B cell (primary cell): ENCODE measurements at regions of chr11 and their contacts with region 1.

Region 1: DNA sequence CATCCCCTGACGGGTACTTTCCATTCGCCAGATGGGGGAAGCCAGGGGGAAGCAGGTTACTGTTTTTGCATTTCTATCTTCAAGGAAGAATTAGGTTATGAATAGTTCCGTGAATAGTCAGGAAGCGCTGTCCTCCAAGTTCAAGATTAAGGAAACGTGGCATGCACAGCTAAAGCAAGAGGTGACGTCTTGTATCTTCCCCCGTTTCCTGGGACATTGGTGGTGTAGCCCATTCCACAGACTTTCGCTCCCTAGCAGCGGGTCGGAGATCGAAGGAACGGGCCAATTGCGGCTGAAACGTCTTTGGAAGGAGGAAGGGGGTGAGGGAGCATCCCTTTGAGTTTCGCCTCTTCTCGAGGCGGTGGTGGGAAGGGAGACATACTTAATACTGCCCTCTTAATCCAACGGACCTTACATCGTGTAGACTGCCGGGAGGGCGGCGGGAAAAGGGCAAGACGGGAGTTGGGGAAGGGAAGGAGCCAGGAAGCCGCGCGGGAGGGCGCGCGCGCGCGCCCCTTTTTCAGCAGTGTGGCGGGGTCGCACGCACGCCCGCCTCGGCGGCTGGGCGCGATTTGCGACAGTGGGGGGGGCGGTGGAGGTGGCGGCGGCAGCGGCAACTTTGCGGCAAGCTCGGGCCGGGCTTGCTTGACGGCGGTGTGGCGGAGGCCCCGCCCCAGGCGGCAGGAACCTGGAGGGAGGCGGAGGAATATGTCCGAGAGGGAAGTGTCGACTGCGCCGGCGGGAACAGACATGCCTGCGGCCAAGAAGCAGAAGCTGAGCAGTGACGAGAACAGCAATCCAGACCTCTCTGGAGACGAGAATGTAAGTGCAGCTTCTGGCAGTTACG is at the start of gene EED:
- DNase-seq: peak; percentile 97
- ATAC-seq: peak; percentile 87
- H3K4me3 ChIP-seq: peak within 1 kb of the TSS; percentile 98 to 100 (median 100)
- H3K4me3 Mint-ChIP-seq: no peak within 1 kb of the TSS
- H3K27ac ChIP-seq: peak within 1 kb of the TSS; percentile 98 to 99
- H3K27ac Mint-ChIP-seq: no peak within 1 kb of the TSS
- H3K4me1 ChIP-seq: peaks cover 27 to 34% of the 10 kb centered on the region in 2 donors
- H3K4me1 Mint-ChIP-seq: peaks cover 23% of the 10 kb centered on the region
- H3K27me3 ChIP-seq: no peaks in the 10 kb centered on the region
- H3K27me3 Mint-ChIP-seq: no peaks in the 10 kb centered on the region
- CTCF ChIP-seq: no peak
- total RNA-seq, gene EED: 49.5 and 58.3 TPM in 2 replicates

Region 2: DNA sequence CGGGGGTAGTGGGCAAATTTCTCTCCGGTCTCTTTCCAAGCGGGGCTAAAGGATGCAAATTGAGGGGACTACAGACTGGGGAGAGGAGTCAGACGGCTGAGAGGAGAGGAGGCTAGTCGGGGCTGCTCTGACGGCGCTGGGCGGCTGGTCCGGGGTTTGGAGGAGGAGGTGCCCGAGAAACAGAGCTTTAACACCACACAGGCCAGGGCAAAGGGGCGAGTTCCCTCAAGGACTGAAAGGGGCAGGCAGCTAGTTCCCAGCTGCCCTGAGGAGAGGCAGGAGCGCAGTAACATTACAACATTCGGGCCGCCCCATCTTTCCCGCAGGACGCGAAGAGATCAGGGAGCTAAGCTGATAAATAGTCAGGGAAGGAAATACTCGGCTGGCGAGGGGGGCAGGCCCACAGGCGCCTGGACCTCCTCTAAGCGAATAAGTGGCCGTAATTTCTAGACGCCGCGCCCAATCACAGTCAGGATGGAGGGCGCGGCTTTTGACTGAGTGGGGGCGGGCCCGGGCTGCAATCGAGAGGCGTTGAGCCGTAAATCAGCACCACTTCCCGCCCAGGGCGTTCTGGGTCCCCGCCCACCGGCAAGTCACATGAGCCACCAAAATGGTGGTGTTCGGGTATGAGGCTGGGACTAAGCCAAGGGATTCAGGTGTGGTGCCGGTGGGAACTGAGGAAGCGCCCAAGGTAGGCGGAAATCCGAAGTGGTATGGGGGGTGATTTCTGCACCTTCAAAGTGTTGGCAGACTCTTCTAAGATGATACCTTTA is 616.6 kb before region 1 on chr11 and contains the start of gene TMEM126B:
- CTCF ChIA-PET with region 1: interaction called, 4 read pairs
- POLR2A ChIA-PET with region 1: interaction called, 4 read pairs
- intact Hi-C with region 1: loop called (anchors 1 kb)
- DNase-seq: peak; percentile 95
- ATAC-seq: peak; percentile 98
- H3K4me3 ChIP-seq: peak within 1 kb of the TSS; percentile 75 to 99 (median 85)
- H3K4me3 Mint-ChIP-seq: peak within 1 kb of the TSS; percentile 99
- H3K27ac ChIP-seq: peak within 1 kb of the TSS; percentile 65 to 87
- H3K27ac Mint-ChIP-seq: peak within 1 kb of the TSS; percentile 96
- H3K4me1 ChIP-seq: peaks cover 14 to 19% of the 10 kb centered on the region in 2 donors
- H3K4me1 Mint-ChIP-seq: peaks cover 28% of the 10 kb centered on the region
- H3K27me3 ChIP-seq: no peaks in the 10 kb centered on the region
- H3K27me3 Mint-ChIP-seq: peaks cover 5% of the 10 kb centered on the region
- CTCF ChIP-seq: no peak
- total RNA-seq, gene TMEM126B: 37.2 and 38.5 TPM in 2 replicates

Region 3: DNA sequence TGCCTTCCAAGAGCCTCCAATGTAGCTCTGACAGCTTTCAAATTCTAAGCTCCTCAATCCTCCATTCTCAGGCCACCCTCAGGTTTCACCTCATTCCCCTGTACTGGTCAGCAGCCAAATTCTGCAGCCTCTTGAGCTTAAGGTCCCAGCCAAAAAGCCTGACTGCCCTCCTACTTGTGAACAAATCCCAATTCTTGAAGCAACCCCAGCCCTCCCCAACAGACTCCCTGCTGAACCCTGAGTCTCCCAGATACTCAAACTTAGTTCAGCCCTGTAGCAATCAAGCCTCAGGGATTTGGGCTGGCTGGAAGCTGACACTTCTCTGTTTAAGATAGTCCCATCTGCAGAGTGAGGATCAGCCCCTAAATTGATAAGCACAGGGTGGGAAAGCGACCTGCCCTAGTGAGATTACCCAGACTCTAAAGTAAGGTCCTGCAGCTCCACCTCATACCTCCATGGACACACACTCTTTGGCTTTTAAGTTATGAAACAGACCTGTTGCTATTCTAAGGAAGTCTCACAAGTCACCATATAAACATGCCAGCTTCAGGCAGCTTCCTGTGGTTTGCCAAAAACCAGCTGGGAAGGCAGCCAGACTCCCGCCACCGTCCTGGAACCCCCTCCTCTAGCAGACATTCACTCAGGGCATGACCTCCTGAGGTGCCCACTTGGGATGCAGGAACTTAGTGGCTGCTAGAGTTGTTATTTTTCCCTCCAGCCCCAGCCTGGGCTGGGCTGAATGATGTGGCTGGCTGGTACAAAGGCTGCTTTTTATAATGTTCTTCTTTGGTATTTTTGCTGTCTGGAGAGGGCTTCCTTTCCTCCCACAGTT is 93.4 kb before region 1 on chr11:
- CTCF ChIA-PET with region 1: no interaction called
- POLR2A ChIA-PET with region 1: no interaction called
- intact Hi-C with region 1: no loop called
- DNase-seq: no peak
- ATAC-seq: no peak
- H3K4me3 ChIP-seq: no peak overlapping the region
- H3K4me3 Mint-ChIP-seq: no peak overlapping the region
- H3K27ac ChIP-seq: no peak overlapping the region
- H3K27ac Mint-ChIP-seq: peak overlapping the region; percentile 16
- H3K4me1 ChIP-seq: peaks cover 0 to 13% of the 10 kb centered on the region in 2 donors
- H3K4me1 Mint-ChIP-seq: peaks cover 7% of the 10 kb centered on the region
- H3K27me3 ChIP-seq: no peaks in the 10 kb centered on the region
- H3K27me3 Mint-ChIP-seq: no peaks in the 10 kb centered on the region
- CTCF ChIP-seq: no peak

Region 4: DNA sequence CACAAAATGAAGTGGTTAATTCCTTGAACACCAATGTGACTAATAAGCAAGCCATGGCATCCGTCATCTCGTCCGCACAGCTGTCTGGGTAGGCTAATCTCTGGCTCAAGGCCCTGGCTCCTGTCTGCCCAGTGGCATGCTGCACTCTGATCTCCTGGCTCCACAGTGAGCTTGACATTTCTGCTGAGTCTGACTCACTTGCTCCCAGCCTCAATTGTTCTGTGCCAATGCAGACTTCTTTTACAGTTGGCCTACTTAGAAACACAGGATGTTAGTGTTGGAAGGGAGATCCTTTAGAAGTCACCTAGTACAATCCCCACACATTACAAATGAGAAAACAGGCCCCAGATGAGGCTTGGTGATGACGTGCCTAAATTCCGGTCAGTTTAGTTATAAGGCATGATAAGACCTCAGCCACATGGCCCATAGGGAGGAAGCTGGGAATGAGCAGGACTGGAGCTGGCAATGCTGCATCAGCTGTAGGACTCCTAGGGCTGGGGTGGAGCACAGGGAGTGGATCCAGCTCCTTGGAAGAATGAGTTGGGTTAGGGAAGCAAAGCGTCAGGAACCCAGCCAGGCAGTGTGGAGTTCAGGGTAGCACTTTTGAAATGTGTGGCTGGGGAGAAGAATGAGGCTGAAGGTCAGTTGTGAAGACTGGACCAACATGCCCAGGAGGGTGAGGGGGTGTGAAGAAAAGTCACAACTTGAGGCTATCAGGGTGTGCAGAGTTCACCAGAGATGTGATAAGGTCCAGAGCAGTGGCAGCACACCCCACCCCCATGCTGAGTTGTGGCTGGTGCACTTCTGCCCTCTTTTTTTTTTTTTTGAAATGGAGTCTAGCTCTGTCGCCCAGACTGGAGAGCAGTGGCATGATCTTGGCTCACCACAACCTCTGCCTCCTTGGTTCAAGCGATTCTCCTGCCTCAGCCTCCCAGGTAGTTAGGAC is 70.4 kb before region 1 on chr11:
- CTCF ChIA-PET with region 1: no interaction called
- POLR2A ChIA-PET with region 1: no interaction called
- intact Hi-C with region 1: no loop called
- DNase-seq: no peak
- ATAC-seq: no peak
- H3K4me3 ChIP-seq: no peak overlapping the region
- H3K4me3 Mint-ChIP-seq: no peak overlapping the region
- H3K27ac ChIP-seq: no peak overlapping the region
- H3K27ac Mint-ChIP-seq: no peak overlapping the region
- H3K4me1 ChIP-seq: no peaks in the 10 kb centered on the region
- H3K4me1 Mint-ChIP-seq: peaks cover 5% of the 10 kb centered on the region
- H3K27me3 ChIP-seq: no peaks in the 10 kb centered on the region
- H3K27me3 Mint-ChIP-seq: peaks cover 6% of the 10 kb centered on the region
- CTCF ChIP-seq: no peak

Region 5: DNA sequence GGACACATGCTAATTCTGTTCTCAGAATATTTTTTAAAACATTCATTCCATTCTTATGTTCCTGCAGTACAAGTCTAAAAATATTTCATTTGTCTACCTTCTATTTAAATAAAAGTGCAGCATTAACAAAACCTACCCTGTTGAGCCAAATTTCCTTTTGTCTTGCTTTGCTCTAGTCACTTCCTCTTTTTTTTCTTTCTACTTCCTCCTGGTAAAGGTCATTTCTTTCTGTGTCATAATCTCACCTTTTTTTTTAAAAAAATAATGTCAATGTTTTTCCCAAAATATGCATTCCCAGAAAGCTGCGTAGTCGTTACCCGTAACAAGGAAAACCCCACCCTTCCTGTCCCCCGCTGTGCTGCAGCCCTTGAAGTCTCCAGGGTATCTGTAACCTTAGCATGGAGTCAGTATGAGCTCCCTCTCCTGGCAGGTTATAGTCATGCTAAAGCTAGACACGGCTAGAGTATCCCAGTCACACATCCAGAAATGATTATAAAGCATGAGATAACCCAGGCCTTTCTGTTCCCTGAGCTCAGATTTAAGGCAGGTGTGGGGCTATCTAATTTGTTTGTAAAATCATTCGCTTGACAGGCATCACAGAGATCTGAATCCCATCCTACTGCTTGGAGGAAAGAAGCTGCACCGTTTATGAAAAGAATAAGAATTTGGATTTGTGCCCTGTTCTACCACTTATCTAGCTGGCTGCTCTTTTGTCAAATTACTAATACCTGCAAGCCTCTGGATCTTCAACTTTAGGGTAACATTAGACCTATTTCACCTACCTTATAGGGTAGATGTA is 51.2 kb before region 1 on chr11:
- CTCF ChIA-PET with region 1: interaction called, 14 read pairs
- POLR2A ChIA-PET with region 1: interaction called, 14 read pairs
- intact Hi-C with region 1: loop called (anchors 1 kb)
- DNase-seq: peak; percentile 80
- ATAC-seq: peak; percentile 94
- H3K4me3 ChIP-seq: peak overlapping the region; percentile 24 to 62 (median 52)
- H3K4me3 Mint-ChIP-seq: peak overlapping the region; percentile 67
- H3K27ac ChIP-seq: peak overlapping the region; percentile 21 to 70
- H3K27ac Mint-ChIP-seq: peak overlapping the region; percentile 90
- H3K4me1 ChIP-seq: peaks cover 20 to 22% of the 10 kb centered on the region in 2 donors
- H3K4me1 Mint-ChIP-seq: peaks cover 28% of the 10 kb centered on the region
- H3K27me3 ChIP-seq: no peaks in the 10 kb centered on the region
- H3K27me3 Mint-ChIP-seq: no peaks in the 10 kb centered on the region
- CTCF ChIP-seq: peak; percentile 79

Region 6: GRCh38 chr11:86218125-86219084 is 26.3 kb before region 1 on chr11:
- CTCF ChIA-PET with region 1: interaction called, 8 read pairs
- POLR2A ChIA-PET with region 1: interaction called, 4 read pairs
- intact Hi-C with region 1: loop called (anchors 1 kb)
- DNase-seq: peak; percentile 65
- ATAC-seq: peak; percentile 29
- H3K4me3 ChIP-seq: peak overlapping the region in 4 of 5 experiments; percentile 21 to 53 (median 34)
- H3K4me3 Mint-ChIP-seq: peak overlapping the region; percentile 75
- H3K27ac ChIP-seq: peak overlapping the region; percentile 62 to 77
- H3K27ac Mint-ChIP-seq: peak overlapping the region; percentile 86
- H3K4me1 ChIP-seq: peaks cover 31 to 36% of the 10 kb centered on the region in 2 donors
- H3K4me1 Mint-ChIP-seq: peaks cover 37% of the 10 kb centered on the region
- H3K27me3 ChIP-seq: no peaks in the 10 kb centered on the region
- H3K27me3 Mint-ChIP-seq: no peaks in the 10 kb centered on the region
- CTCF ChIP-seq: peak; percentile 68

Region 7: DNA sequence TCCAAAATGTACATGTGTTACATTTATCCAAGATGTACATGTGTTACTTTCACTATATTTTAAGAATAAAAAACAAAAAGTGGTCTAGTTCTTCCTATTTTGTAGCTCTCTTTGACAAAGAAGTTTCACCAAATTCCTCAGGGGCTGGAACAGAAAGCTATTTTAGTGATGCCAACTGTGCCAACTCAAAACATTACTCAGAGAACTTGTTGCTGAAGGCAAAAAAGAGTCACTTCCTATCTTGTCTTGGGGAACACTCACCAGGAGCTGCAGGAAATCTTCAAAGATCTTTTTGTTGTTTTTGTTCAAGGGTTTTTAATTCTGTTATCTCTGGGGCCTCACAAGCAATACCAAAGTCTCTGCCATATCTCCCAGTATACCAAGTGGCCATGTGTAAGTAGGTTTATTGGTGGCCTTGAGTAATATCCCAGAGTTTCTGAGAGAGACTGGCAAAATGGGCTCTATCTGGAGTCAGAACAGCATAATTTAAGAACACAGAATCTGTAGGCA is 13.8 kb before region 1 on chr11:
- CTCF ChIA-PET with region 1: no interaction called
- POLR2A ChIA-PET with region 1: no interaction called
- intact Hi-C with region 1: no loop called
- DNase-seq: no peak
- ATAC-seq: no peak
- H3K4me3 ChIP-seq: no peak overlapping the region
- H3K4me3 Mint-ChIP-seq: no peak overlapping the region
- H3K27ac ChIP-seq: no peak overlapping the region
- H3K27ac Mint-ChIP-seq: no peak overlapping the region
- H3K4me1 ChIP-seq: no peaks in the 10 kb centered on the region
- H3K4me1 Mint-ChIP-seq: peaks cover 6% of the 10 kb centered on the region
- H3K27me3 ChIP-seq: no peaks in the 10 kb centered on the region
- H3K27me3 Mint-ChIP-seq: no peaks in the 10 kb centered on the region
- CTCF ChIP-seq: no peak

Region 8: DNA sequence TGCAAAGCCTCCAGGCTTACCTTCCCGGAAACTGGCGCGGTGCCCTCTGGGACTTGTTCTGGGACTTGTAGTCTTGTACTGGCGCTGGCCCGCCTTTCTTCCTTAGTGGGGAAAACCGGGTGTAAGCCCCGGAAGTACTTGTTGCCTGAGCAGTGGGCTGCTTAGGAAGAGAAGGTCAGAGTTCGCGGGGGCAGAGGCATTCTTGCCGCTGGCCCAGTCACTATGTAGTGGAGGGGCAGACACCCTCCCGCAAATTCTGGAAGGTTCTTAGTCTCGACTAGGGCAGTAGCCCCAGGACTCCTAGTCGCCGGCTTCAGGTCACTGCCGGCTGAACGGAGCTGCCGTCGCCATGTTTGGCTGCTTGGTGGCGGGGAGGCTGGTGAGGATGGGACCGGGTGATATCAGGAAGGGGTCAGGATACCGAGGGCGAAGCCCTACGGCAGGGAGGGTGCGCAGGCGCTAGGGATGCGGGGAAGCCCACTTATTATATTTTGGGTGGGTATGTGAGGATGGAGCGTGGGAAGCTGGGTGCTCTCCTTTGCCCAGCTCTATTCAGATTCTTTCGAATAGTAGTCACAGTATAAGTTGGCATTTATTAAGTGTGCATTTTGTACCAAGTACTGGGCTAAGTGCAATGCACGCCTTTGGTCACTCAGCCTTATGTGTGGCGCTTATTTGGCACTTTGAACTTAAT is 57.5 kb after region 1 on chr11 and contains the start of gene HIKESHI:
- CTCF ChIA-PET with region 1: interaction called, 3 read pairs
- POLR2A ChIA-PET with region 1: interaction called, 5 read pairs
- intact Hi-C with region 1: loop called (anchors 1 kb)
- DNase-seq: peak; percentile 90
- ATAC-seq: peak; percentile 99
- H3K4me3 ChIP-seq: peak within 1 kb of the TSS; percentile 70 to 96 (median 92)
- H3K4me3 Mint-ChIP-seq: peak within 1 kb of the TSS; percentile 98
- H3K27ac ChIP-seq: peak within 1 kb of the TSS; percentile 70 to 95
- H3K27ac Mint-ChIP-seq: peak within 1 kb of the TSS; percentile 95
- H3K4me1 ChIP-seq: peaks cover 10 to 13% of the 10 kb centered on the region in 2 donors
- H3K4me1 Mint-ChIP-seq: peaks cover 20% of the 10 kb centered on the region
- H3K27me3 ChIP-seq: no peaks in the 10 kb centered on the region
- H3K27me3 Mint-ChIP-seq: no peaks in the 10 kb centered on the region
- CTCF ChIP-seq: no peak
- total RNA-seq, gene HIKESHI: 23.3 and 24.4 TPM in 2 replicates